ENCODE measurements at regions of chr1 and their contacts with region 1.

Region 1: DNA sequence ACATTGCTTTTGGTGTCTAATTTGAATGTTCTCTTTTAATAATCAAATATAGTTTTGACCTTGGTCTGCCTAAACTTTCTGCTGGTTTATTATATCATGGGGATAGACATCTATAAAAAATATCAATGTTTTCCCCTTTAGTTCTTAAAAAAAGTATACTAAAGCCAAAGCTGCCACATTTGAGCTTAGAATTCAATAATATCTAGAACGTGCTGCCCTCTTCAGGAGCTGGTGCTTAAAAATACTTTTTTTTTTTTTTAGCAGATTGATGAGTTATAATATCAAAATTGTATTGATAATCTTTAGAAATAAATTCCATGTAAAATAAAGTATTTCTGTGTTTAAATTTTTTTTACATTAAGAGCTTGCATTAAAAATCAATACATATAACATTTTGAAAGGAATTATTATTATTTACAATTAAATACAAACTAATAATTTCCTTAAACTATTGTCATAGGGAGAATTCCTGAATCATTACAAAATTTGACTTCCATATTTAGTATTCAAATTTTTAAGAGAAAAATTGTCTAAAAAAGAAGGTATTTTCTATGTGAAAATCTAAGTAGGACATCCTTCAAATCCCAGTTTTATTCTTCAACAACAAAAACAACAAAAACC is 40.1 kb upstream of the ADGRL2 start:
- DNase-seq: peak; percentile 27
- H3K4me3 ChIP-seq: no peak overlapping the region
- H3K27ac ChIP-seq: no peak overlapping the region
- H3K4me1 ChIP-seq: no peaks in the 10 kb centered on the region
- H3K27me3 ChIP-seq: no peaks in the 10 kb centered on the region
- CTCF ChIP-seq: peak; percentile 61

Region 2: DNA sequence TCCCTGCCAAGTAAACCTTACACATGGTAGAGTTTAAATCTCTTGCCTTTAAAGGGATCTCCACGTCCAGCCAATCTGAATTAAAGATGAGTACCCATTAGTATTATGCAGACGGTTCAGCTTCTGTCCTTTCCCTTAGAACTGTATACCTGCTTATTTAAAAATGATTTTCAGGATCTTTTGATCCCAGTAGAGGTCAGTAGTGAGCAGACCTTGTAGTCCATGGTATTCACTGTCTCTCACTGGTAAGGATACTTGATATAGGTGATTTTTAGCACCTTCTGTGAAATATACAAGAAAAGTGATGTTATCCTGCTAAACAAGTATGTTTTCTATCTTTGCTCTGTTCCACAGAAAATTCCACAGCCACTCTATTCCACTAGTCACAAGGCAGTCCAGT is 1542.5 kb before region 1 on chr1:
- CTCF ChIA-PET with region 1: no interaction called
- POLR2A ChIA-PET with region 1: no interaction called
- intact Hi-C with region 1: loop called (anchors 5 kb)
- DNase-seq: peak; percentile 67
- H3K4me3 ChIP-seq: no peak overlapping the region
- H3K27ac ChIP-seq: no peak overlapping the region
- H3K4me1 ChIP-seq: no peaks in the 10 kb centered on the region
- H3K27me3 ChIP-seq: no peaks in the 10 kb centered on the region
- CTCF ChIP-seq: peak; percentile 65

Region 3: DNA sequence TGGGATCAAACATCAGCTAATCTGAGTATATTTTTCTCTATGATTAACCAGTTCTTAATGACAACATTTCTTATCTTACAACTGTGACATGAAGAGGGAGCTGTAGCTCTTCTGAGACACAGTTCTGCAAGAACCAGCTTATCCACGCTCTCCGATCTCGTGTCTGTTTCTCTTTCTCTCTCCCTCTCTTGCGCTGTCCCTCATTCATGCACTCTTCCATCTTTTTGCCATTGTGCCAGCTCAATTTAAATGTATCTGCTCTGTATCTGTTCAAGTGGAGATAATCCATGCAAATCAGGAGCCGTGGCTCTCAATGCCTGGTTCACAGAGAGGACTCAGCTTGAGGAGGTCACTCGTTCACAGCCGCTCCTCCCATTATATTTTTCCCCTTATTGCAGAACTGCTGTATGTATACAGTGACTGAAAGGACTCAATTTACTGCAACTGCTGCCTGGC is 454.6 kb before region 1 on chr1:
- CTCF ChIA-PET with region 1: no interaction called
- POLR2A ChIA-PET with region 1: no interaction called
- intact Hi-C with region 1: loop called (anchors 10 kb)
- DNase-seq: peak; percentile 75
- H3K4me3 ChIP-seq: peak overlapping the region; percentile 45
- H3K27ac ChIP-seq: no peak overlapping the region
- H3K4me1 ChIP-seq: no peaks in the 10 kb centered on the region
- H3K27me3 ChIP-seq: no peaks in the 10 kb centered on the region
- CTCF ChIP-seq: peak; percentile 69

Region 4: GRCh38 chr1:81313289-81313688 is 447.3 kb before region 1 on chr1:
- CTCF ChIA-PET with region 1: no interaction called
- POLR2A ChIA-PET with region 1: interaction called, 16 read pairs
- intact Hi-C with region 1: loop called (anchors 10 kb)
- DNase-seq: no peak
- H3K4me3 ChIP-seq: no peak overlapping the region
- H3K27ac ChIP-seq: no peak overlapping the region
- H3K4me1 ChIP-seq: peaks cover 17% of the 10 kb centered on the region
- H3K27me3 ChIP-seq: no peaks in the 10 kb centered on the region
- CTCF ChIP-seq: no peak

Region 5: GRCh38 chr1:81414488-81415015 is 346.0 kb before region 1 on chr1:
- CTCF ChIA-PET with region 1: no interaction called
- POLR2A ChIA-PET with region 1: no interaction called
- intact Hi-C with region 1: loop called (anchors 10 kb)
- DNase-seq: peak; percentile 74
- H3K4me3 ChIP-seq: no peak overlapping the region
- H3K27ac ChIP-seq: no peak overlapping the region
- H3K4me1 ChIP-seq: no peaks in the 10 kb centered on the region
- H3K27me3 ChIP-seq: no peaks in the 10 kb centered on the region
- CTCF ChIP-seq: peak; percentile 97

Region 6: GRCh38 chr1:81549604-81550127 is 210.9 kb before region 1 on chr1:
- CTCF ChIA-PET with region 1: interaction called, 6 read pairs
- POLR2A ChIA-PET with region 1: no interaction called
- intact Hi-C with region 1: loop called (anchors 5 kb)
- DNase-seq: peak; percentile 55
- H3K4me3 ChIP-seq: no peak overlapping the region
- H3K27ac ChIP-seq: no peak overlapping the region
- H3K4me1 ChIP-seq: peaks cover 5% of the 10 kb centered on the region
- H3K27me3 ChIP-seq: no peaks in the 10 kb centered on the region
- CTCF ChIP-seq: peak; percentile 58

Region 7: GRCh38 chr1:81775510-81775909 is 14.9 kb after region 1 on chr1:
- CTCF ChIA-PET with region 1: no interaction called
- POLR2A ChIA-PET with region 1: no interaction called
- intact Hi-C with region 1: no loop called
- DNase-seq: no peak
- H3K4me3 ChIP-seq: no peak overlapping the region
- H3K27ac ChIP-seq: no peak overlapping the region
- H3K4me1 ChIP-seq: no peaks in the 10 kb centered on the region
- H3K27me3 ChIP-seq: no peaks in the 10 kb centered on the region
- CTCF ChIP-seq: no peak

Measured in A673 (cell line).